T-cell (primary cell): ENCODE measurements at regions of chr10 and their contacts with region 1.

Region 1: GRCh38 chr10:68385740-68386139 is 21.3 kb downstream of the RUFY2 start:
- DNase-seq: no peak
- ATAC-seq: no peak
- H3K4me3 ChIP-seq: no peak overlapping the region
- H3K4me3 Mint-ChIP-seq: no peak overlapping the region
- H3K27ac ChIP-seq: no peak overlapping the region
- H3K27ac Mint-ChIP-seq: no peak overlapping the region
- H3K4me1 ChIP-seq: no peaks in the 10 kb centered on the region
- H3K4me1 Mint-ChIP-seq: no peaks in the 10 kb centered on the region
- H3K27me3 ChIP-seq: no peaks in the 10 kb centered on the region
- H3K27me3 Mint-ChIP-seq: no peaks in the 10 kb centered on the region

Region 2: GRCh38 chr10:68526626-68527307 is 141.0 kb after region 1 on chr10:
- CTCF ChIA-PET with region 1: no interaction called
- POLR2A ChIA-PET with region 1: interaction called in 1 of 2 experiments, 10 read pairs
- DNase-seq: no peak
- ATAC-seq: peak in 2 of 4 experiments; percentile 20 to 23
- H3K4me3 ChIP-seq: peak overlapping the region; percentile 79 to 87
- H3K4me3 Mint-ChIP-seq: peak overlapping the region; percentile 84 to 91 (median 88)
- H3K27ac ChIP-seq: peak overlapping the region; percentile 84
- H3K27ac Mint-ChIP-seq: peak overlapping the region; percentile 85 to 90
- H3K4me1 ChIP-seq: peaks cover 4 to 18% of the 10 kb centered on the region in 2 experiments
- H3K4me1 Mint-ChIP-seq: peaks cover 7 to 14% (median 10%) of the 10 kb centered on the region in 3 donors
- H3K27me3 ChIP-seq: no peaks in the 10 kb centered on the region
- H3K27me3 Mint-ChIP-seq: no peaks in the 10 kb centered on the region

Region 3: GRCh38 chr10:68759967-68760366 is 374.2 kb after region 1 on chr10:
- CTCF ChIA-PET with region 1: no interaction called
- POLR2A ChIA-PET with region 1: no interaction called
- DNase-seq: no peak
- ATAC-seq: no peak
- H3K4me3 ChIP-seq: no peak overlapping the region
- H3K4me3 Mint-ChIP-seq: no peak overlapping the region
- H3K27ac ChIP-seq: no peak overlapping the region
- H3K27ac Mint-ChIP-seq: no peak overlapping the region
- H3K4me1 ChIP-seq: no peaks in the 10 kb centered on the region
- H3K4me1 Mint-ChIP-seq: peaks cover 0 to 8% (median 5%) of the 10 kb centered on the region in 3 donors
- H3K27me3 ChIP-seq: no peaks in the 10 kb centered on the region
- H3K27me3 Mint-ChIP-seq: no peaks in the 10 kb centered on the region

Region 4: DNA sequence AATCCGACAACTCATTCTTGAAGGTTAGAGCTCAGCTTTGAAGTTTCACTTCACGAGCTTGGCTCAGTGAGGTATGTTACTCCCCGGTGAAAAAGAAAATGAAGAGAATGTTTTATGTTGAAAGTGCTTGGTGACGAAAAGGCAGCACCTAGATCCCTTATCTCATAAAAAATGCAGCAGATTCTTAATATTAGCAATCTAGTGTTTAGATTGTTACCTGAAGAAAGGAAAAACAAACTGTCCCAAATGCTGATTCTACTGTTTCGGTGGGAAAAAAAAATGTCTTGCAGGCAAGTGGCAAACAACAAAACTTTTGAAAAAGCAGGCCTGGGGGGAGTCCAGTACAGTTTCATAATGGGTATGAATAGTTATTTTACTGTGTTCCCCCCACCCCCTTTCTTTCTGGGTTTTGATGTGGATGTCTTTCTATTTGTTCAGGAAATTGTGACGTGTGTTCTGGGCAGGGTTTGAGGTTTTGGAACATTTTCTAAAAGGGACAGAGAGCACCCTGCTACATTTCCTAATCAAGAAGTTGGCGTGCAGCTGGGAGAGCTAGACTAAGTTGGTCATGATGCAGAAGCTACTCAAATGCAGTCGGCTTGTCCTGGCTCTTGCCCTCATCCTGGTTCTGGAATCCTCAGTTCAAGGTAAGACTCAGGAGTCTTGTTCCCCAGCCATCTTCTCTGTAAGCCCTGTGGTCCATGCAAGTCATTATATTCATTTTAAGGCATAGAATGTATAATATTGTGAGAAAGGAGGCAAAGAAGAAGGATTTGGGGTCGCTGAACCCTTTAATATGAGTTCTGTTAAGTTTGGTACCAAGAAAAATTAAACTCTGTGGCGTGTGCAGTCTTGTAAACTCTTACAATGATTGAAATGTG is 702.1 kb after region 1 on chr10 and contains the start of gene SRGN:
- CTCF ChIA-PET with region 1: no interaction called
- POLR2A ChIA-PET with region 1: no interaction called
- DNase-seq: peak; percentile 21 to 93 (median 80)
- ATAC-seq: peak; percentile 69 to 80 (median 76)
- H3K4me3 ChIP-seq: peak within 1 kb of the TSS; percentile 59 to 86
- H3K4me3 Mint-ChIP-seq: peak within 1 kb of the TSS; percentile 79 to 92 (median 86)
- H3K27ac ChIP-seq: peak within 1 kb of the TSS; percentile 98
- H3K27ac Mint-ChIP-seq: peak within 1 kb of the TSS; percentile 95 to 96
- H3K4me1 ChIP-seq: peaks cover 39 to 47% of the 10 kb centered on the region in 2 experiments
- H3K4me1 Mint-ChIP-seq: peaks cover 56 to 61% (median 60%) of the 10 kb centered on the region in 3 donors
- H3K27me3 ChIP-seq: no peaks in the 10 kb centered on the region
- H3K27me3 Mint-ChIP-seq: no peaks in the 10 kb centered on the region
- total RNA-seq, gene SRGN: 91.4 to 271 (median 137) TPM